ENCODE measurements at regions of chr1 and their contacts with region 1.

Region 1: DNA sequence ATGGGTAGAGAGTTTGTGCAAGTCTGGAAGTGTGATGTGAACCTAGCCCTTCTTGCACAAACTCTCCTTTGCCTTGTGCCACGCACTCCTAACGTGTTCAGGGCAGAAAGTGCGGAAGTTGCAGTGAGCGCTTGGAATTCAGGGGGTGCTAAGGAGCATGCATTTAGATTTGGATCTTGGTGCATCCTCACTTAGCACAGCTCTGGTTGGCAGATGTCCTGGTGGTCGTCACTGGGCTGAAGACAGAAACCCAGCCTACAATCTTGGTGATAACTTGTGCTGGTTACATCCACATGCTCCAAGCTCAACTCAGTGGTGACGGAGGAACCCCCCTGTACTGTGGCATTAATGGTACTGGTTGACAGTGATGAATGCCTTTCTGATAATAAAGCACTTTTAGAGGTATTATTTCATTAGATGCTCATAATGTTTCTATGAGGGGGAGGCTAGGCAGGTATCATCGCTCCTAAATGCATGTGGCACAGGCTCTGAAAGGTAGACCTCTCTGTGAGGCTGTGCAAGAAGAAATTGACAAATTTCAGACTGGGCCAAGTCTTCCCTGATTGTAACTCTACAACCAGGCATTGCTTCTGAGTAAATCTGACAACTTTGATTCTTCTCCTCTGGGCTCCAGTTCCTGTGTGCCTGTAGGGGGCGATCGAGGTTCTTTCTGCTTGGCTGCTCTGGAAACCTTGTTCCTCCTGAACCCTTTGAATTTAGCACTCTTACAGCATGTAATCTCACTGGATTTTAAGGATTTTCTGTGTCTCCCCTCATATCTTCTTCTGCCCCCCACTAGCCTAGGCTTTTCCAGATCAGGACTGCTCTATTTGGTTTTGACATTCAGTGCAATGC is 40.6 kb downstream of the MAPKAPK2 start:
- DNase-seq: peak in 1 of 2 experiments; percentile 21
- H3K4me3 ChIP-seq: no peak overlapping the region
- H3K27ac ChIP-seq: no peak overlapping the region
- H3K4me1 ChIP-seq: peaks cover 44% of the 10 kb centered on the region
- H3K27me3 ChIP-seq: no peaks in the 10 kb centered on the region
- CTCF ChIP-seq: no peak; the same call in 1 of the 2 replicates

Region 2: DNA sequence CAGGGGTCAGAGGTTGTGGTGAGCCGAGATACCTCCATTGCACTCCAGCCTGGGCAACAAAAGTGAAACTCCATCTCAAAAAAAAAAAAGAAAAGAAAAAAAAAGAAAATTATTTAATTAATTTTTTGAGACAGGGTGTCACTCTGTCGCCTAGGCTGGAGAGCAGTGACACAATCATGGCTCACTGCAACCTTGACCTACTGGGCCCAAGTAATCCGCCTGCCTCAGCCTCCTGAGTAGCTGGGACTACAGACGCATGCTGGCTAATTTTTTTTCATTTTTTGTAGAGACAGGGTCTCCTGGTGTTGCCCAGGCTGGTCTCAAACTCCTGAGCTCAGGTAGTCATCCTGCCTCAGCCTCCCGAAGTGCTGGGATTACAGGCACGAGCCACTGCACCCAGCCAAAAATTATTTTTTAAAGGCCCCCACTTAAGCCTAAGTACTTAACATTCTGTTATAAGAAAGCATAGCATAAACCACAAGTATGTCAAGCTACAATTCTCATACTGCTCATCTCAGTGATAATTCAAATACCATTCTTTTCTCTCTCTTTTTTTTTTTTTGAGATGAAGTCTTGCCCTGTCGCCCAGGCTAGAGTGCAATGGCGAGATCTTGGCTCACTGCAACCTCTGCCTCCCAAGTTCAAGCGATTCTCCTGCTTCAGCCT is 995.3 kb before region 1 on chr1:
- CTCF ChIA-PET with region 1: no interaction called
- POLR2A ChIA-PET with region 1: no interaction called
- intact Hi-C with region 1: no loop called
- DNase-seq: no peak
- H3K4me3 ChIP-seq: no peak overlapping the region
- H3K27ac ChIP-seq: no peak overlapping the region
- H3K4me1 ChIP-seq: no peaks in the 10 kb centered on the region; the same call in 1 of the 2 replicates
- H3K27me3 ChIP-seq: no peaks in the 10 kb centered on the region
- CTCF ChIP-seq: no peak

Region 3: GRCh38 chr1:207077470-207078377 is 352.4 kb after region 1 on chr1:
- CTCF ChIA-PET with region 1: no interaction called
- POLR2A ChIA-PET with region 1: no interaction called
- intact Hi-C with region 1: loop called (anchors 5 kb)
- DNase-seq: peak; percentile 61 to 67
- H3K4me3 ChIP-seq: no peak overlapping the region
- H3K27ac ChIP-seq: no peak overlapping the region
- H3K4me1 ChIP-seq: no peaks in the 10 kb centered on the region
- H3K27me3 ChIP-seq: no peaks in the 10 kb centered on the region
- CTCF ChIP-seq: peak; percentile 95